Activated T-helper 1 cell treated with anti-CD3 and anti-CD28 coated beads, Interleukin-12 subunit alpha, Interleukin-12 subunit beta, Interleukin-2, Interleukin-4 antibody, amounts not matched to agents 30 ng/mL and 10 ng/mL and 1 ng/mL, durations not matched to agents 14 hours and 24 hours and 36 hours (primary cell): ENCODE measurements at regions of chr10 and their contacts with region 1.

Region 1: GRCh38 chr10:110497438-110498086 is at the start of gene DUSP5:
- DNase-seq: peak; percentile 96
- H3K4me3 Mint-ChIP-seq: peak within 1 kb of the TSS; percentile 100
- H3K27ac Mint-ChIP-seq: peak within 1 kb of the TSS; percentile 97
- H3K4me1 Mint-ChIP-seq: peaks cover 62% of the 10 kb centered on the region
- H3K27me3 Mint-ChIP-seq: no peaks in the 10 kb centered on the region
- total RNA-seq, gene DUSP5: 140 and 141 TPM in 2 replicates

Region 2: DNA sequence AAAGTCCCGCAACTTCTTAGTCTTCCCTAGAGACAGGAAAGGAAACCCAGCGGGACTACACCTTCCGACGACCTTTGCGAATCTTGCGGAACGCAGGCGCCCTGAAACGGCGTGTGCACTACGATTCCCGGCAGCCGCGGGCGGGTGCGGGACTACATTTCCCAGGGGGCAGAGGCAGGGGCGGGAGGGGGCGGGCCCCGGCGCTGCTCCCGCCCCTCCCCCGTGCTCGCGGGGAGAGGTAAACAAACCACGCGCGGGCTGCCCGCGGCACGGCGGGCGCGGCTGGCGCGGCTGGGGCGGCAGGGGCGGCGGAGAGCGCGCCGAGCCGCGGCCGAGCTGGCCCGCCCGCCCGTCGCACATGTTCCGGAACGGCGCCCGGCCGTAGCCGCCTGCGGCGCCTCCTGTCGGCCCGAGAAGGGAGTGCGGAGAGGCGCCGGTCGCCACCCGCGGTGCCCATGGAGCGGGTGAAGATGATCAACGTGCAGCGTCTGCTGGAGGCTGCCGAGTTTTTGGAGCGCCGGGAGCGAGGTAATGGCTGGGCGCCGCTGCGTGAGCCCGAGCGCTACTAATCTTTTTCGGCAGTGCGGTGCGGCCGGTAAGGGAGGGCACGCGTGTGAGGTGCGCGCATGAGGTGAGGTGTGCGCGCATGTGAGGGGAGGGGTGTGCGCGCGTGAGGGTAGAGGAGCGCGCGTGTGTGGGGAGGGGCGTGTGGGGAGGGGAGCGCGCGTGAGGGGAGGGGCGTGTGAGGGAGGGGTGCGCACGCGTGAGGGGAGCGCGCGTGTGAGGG is 271.6 kb before region 1 on chr10:
- intact Hi-C with region 1: loop called (anchors 1 kb)
- DNase-seq: peak; percentile 84
- H3K4me3 Mint-ChIP-seq: peak overlapping the region; percentile 92
- H3K27ac Mint-ChIP-seq: peak overlapping the region; percentile 97
- H3K4me1 Mint-ChIP-seq: peaks cover 47% of the 10 kb centered on the region
- H3K27me3 Mint-ChIP-seq: peaks cover 4% of the 10 kb centered on the region

Region 3: DNA sequence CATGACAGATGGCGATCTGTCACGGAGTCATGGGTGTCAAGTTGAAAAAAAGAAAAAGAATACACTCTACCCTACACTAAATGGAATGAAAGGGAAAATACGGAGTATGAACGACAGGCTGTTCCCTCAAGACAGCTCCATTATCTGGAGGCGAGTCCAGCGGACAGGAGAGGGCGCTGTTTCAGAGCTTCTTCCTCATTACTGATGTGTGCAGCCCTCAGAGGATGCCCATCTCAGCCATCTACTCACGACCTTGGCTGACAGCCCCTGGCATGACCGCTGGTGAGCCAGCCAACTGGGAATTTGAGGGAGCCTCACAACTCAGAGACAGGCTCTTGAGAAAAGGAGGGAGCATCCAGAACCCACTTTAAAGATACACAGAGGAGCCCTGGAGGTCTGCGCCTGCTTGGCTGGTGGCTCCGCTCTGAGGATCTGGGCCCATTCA is 143.2 kb before region 1 on chr10:
- intact Hi-C with region 1: loop called (anchors 1 kb)
- DNase-seq: peak; percentile 72
- H3K4me3 Mint-ChIP-seq: peak overlapping the region; percentile 82
- H3K27ac Mint-ChIP-seq: peak overlapping the region; percentile 97
- H3K4me1 Mint-ChIP-seq: peaks cover 82% of the 10 kb centered on the region
- H3K27me3 Mint-ChIP-seq: no peaks in the 10 kb centered on the region

Region 4: DNA sequence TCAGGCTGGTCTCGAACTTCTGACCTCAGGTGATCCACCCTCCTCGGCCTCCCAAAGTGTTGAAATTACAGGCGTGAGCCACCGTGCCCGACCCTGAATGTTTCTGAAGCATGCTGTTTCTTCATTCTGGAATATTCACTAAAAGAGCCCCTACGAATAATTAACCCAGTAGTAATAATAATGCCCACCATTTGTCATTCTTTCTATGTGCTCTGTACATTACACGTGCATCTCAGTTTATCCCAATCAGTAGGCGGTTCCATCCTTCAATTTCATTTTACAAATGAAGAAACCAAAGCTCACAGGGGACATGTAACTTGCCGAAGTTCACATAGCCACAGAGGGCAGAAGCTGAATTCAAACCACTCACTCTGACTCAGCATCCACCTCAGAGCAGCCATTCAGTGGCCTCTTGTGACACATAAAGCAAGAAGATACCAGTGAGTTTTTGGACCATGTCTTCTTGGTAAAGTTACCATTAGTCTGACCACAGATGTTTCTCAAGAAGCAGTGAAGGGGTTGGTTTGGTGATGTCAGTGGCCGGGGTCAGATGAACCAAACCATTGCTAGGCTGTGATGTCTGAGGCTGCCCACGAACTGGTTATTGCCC is 71.8 kb before region 1 on chr10:
- intact Hi-C with region 1: loop called (anchors 1 kb)
- DNase-seq: peak; percentile 53
- H3K4me3 Mint-ChIP-seq: peak overlapping the region; percentile 34
- H3K27ac Mint-ChIP-seq: peak overlapping the region; percentile 91
- H3K4me1 Mint-ChIP-seq: peaks cover 70% of the 10 kb centered on the region
- H3K27me3 Mint-ChIP-seq: no peaks in the 10 kb centered on the region

Region 5: DNA sequence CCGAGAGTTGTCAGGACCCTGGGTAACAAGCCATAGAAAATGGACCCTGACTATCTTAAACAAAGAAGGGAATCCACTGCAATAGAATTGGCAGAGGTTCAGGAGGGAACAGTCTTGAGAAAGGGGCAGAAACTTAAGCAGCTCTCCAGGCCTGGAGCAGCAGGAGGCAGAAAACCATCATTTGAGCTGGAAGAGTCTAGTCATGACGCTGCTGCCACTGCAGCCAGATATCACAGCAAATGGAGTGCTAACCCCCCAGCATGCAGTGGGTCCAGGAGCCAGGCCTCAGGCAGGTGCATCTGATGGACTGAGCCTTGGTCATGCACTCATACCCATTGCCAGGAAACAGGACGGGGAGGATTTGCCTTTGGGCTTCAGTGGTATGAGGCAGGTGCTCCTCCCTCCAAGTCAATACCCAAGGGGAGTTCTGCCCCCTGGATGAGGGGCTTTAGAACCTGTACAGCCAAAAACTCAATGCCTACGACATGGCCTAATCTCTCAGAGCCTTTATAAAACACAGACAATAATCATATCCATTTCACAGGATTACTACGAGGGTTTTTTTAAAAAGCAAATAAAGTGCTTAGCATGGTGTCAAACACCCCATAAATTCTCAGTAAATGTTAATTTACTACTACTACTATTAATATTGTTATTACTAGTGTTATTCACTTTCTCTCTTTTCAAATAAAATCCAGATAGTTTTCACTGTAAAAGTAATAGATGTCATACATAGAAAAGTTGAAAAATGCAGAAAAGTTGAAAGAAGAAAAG is 30.8 kb after region 1 on chr10:
- intact Hi-C with region 1: loop called (anchors 1 kb)
- DNase-seq: no peak
- H3K4me3 Mint-ChIP-seq: peak overlapping the region; percentile 64
- H3K27ac Mint-ChIP-seq: peak overlapping the region; percentile 94
- H3K4me1 Mint-ChIP-seq: peaks cover 83% of the 10 kb centered on the region
- H3K27me3 Mint-ChIP-seq: no peaks in the 10 kb centered on the region

Region 6: GRCh38 chr10:110567201-110568054 is 69.9 kb after region 1 on chr10 and contains the start of gene SMC3:
- intact Hi-C with region 1: loop called (anchors 1 kb)
- DNase-seq: peak; percentile 89
- H3K4me3 Mint-ChIP-seq: peak within 1 kb of the TSS; percentile 93
- H3K27ac Mint-ChIP-seq: peak within 1 kb of the TSS; percentile 96
- H3K4me1 Mint-ChIP-seq: peaks cover 44% of the 10 kb centered on the region
- H3K27me3 Mint-ChIP-seq: peaks cover 14% of the 10 kb centered on the region
- total RNA-seq, gene SMC3: 74.5 and 77.9 TPM in 2 replicates

Region 7: DNA sequence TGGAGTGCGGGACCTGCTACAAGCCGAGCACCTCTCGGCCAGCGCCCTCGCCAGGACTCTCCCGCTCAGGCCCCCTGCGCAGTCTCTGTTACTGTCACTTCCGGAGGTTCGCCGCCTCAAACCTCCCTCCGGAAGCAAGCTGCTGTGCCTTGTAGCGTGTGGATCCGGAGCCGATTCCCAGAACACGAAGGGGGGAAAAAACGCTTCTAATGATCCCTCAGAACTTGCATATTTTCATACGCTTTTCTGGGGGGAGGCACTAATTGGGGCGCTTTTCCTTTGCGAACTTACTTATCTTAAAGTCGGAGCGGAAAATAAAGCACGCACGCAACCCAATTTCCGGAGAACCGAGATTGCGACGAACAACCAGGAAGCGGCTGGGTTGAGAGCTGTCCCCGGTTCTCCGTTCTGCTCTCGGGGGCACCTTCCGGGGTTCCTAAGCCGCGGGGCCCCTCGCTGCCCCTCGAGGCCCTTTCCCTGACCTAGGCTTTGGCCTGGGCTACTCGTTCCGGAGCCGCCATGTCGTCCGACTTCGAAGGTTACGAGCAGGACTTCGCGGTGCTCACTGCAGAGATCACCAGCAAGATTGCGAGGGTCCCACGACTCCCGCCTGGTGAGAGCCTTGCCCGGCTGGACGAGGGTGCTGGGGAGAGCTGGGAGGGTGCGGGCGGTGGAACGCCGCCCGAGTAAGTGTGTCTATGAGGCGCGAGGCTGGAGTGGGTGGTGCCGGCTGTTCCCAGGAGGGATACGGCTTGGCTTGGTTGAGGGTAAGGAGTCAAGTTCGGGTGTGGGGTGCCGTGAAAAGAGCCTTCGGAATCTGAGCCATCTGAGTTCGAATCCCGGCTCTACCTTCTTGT is 1949.5 kb after region 1 on chr10 and contains the starts of genes VTI1A and ZDHHC6:
- intact Hi-C with region 1: loop called (anchors 5 kb)
- DNase-seq: peak; percentile 80
- H3K4me3 Mint-ChIP-seq: peak within 1 kb of the TSS; percentile 93
- H3K27ac Mint-ChIP-seq: peak within 1 kb of the TSS; percentile 93
- H3K4me1 Mint-ChIP-seq: peaks cover 47% of the 10 kb centered on the region
- H3K27me3 Mint-ChIP-seq: no peaks in the 10 kb centered on the region
- total RNA-seq, gene VTI1A: 39.4 and 39.9 TPM in 2 replicates
- total RNA-seq, gene ZDHHC6: 51.9 and 52.6 TPM in 2 replicates